ENCODE measurements at regions of chr1 and their contacts with region 1.

Region 1: GRCh38 chr1:176559878-176560277 is 96.9 kb downstream of the PAPPA2 start:
- DNase-seq: peak; percentile 36
- ATAC-seq: peak; percentile 67
- H3K4me3 Mint-ChIP-seq: no peak overlapping the region
- H3K27ac Mint-ChIP-seq: no peak overlapping the region
- H3K4me1 Mint-ChIP-seq: no peaks in the 10 kb centered on the region
- H3K27me3 Mint-ChIP-seq: no peaks in the 10 kb centered on the region

Region 2: GRCh38 chr1:176691251-176692228 is 131.7 kb after region 1 on chr1:
- CTCF ChIA-PET with region 1: interaction called, 19 read pairs
- POLR2A ChIA-PET with region 1: no interaction called
- DNase-seq: peak; percentile 29
- ATAC-seq: peak; percentile 71
- H3K4me3 Mint-ChIP-seq: no peak overlapping the region
- H3K27ac Mint-ChIP-seq: no peak overlapping the region
- H3K4me1 Mint-ChIP-seq: no peaks in the 10 kb centered on the region
- H3K27me3 Mint-ChIP-seq: no peaks in the 10 kb centered on the region